ENCODE measurements at regions of chr18 and their contacts with region 1.

Region 1: DNA sequence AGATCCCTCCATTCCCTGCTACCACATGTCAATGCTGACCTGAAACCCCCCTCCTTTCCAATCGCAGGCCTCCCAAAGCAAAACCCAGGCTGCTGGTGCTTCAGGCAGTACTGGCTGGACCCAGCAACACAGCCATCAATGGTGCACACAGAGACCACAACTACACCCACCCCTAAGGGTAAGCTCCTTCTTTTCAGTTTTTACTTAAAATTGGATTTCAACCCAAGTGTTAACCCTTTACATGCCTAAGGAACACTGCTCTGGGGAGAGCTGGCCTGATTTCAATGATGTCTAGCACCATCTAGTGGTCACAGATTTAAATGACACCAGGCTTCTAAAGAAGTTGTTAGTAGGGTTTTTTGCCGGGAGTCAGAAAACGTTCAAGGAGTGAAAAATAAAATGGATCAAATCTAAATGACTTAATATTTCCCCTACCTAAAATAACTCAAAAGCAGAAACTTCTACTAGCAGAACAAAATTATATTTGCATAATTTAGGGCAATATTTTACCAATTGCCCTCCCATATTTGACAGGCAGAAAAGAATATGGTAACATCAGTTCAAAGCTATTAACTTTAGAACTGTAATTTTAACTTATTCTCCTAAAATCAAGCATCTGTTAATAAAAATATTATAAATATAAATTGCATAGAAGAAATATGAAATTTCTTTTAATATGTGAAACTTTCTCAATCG is 24.6 kb downstream of the FECH start:
- DNase-seq: no peak
- H3K4me3 ChIP-seq: no peak overlapping the region
- H3K27ac ChIP-seq: no peak overlapping the region
- H3K4me1 ChIP-seq: no peaks in the 10 kb centered on the region
- H3K27me3 ChIP-seq: no peaks in the 10 kb centered on the region
- CTCF ChIP-seq: peak; percentile 71 to 88 (median 77)
- EP300 ChIP-seq: no peak
- POLR2A ChIP-seq: no peak

Region 2: GRCh38 chr18:56748698-56749268 is 813.1 kb before region 1 on chr18:
- in situ Hi-C with region 1: loop called in 3 of 4 experiments (anchors 25 kb)
- intact Hi-C with region 1: no loop called
- DNase-seq: no peak
- H3K4me3 ChIP-seq: no peak overlapping the region
- H3K27ac ChIP-seq: no peak overlapping the region
- H3K4me1 ChIP-seq: no peaks in the 10 kb centered on the region
- H3K27me3 ChIP-seq: no peaks in the 10 kb centered on the region
- CTCF ChIP-seq: peak; percentile 31 to 61 (median 56)
- EP300 ChIP-seq: no peak
- POLR2A ChIP-seq: no peak

Region 3: GRCh38 chr18:56869189-56869777 is 692.6 kb before region 1 on chr18:
- in situ Hi-C with region 1: loop called in 1 of 4 experiments (anchors 25 kb)
- intact Hi-C with region 1: no loop called
- DNase-seq: no peak
- H3K4me3 ChIP-seq: no peak overlapping the region
- H3K27ac ChIP-seq: no peak overlapping the region
- H3K4me1 ChIP-seq: no peaks in the 10 kb centered on the region
- H3K27me3 ChIP-seq: no peaks in the 10 kb centered on the region
- CTCF ChIP-seq: peak; percentile 50 to 64 (median 56)
- EP300 ChIP-seq: no peak
- POLR2A ChIP-seq: no peak

Region 4: GRCh38 chr18:57863706-57864105 is 301.8 kb after region 1 on chr18:
- in situ Hi-C with region 1: no loop called
- intact Hi-C with region 1: no loop called
- DNase-seq: no peak
- H3K4me3 ChIP-seq: no peak overlapping the region
- H3K27ac ChIP-seq: no peak overlapping the region
- H3K4me1 ChIP-seq: no peaks in the 10 kb centered on the region
- H3K27me3 ChIP-seq: no peaks in the 10 kb centered on the region
- CTCF ChIP-seq: no peak
- EP300 ChIP-seq: no peak
- POLR2A ChIP-seq: no peak

Measured in transverse colon (tissue), 4 donors.